GM10248 (cell line): ENCODE measurements at regions of chr12 and their contacts with region 1.

Region 1: GRCh38 chr12:116055895-116056607 is 221.4 kb downstream of the MED13L start:
- DNase-seq: no peak
- CTCF ChIP-seq: no peak

Region 2: GRCh38 chr12:116002890-116003536 is 53.0 kb before region 1 on chr12:
- CTCF ChIA-PET with region 1: no interaction called
- POLR2A ChIA-PET with region 1: no interaction called
- DNase-seq: no peak
- CTCF ChIP-seq: no peak

Region 3: GRCh38 chr12:116066381-116067230 is 10.6 kb after region 1 on chr12:
- CTCF ChIA-PET with region 1: interaction called, 10 read pairs
- POLR2A ChIA-PET with region 1: no interaction called
- DNase-seq: peak; percentile 32
- CTCF ChIP-seq: peak; percentile 66

Region 4: DNA sequence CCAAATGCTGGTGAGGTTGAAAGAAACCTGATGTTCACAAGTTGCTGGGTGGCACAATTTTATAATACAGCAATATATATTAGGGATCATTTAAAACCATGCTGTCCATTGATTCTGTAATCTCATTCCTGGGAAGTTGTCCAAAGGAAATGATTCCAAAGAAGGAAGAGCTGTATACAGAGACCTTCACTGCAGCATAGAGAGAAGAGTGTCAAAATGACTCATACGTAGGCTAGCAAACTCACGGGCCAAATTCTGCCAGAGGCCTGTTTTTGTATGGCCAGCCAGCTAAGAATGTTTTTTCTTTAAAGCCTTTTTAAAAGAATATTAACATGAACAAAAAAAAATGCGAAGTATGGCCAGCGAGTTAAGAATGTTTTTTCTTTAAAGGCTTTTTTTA is 290.7 kb after region 1 on chr12:
- CTCF ChIA-PET with region 1: no interaction called
- POLR2A ChIA-PET with region 1: no interaction called
- DNase-seq: no peak
- CTCF ChIP-seq: no peak